IMR-90 (cell line): ENCODE measurements at regions of chr12 and their contacts with region 1.

Region 1: DNA sequence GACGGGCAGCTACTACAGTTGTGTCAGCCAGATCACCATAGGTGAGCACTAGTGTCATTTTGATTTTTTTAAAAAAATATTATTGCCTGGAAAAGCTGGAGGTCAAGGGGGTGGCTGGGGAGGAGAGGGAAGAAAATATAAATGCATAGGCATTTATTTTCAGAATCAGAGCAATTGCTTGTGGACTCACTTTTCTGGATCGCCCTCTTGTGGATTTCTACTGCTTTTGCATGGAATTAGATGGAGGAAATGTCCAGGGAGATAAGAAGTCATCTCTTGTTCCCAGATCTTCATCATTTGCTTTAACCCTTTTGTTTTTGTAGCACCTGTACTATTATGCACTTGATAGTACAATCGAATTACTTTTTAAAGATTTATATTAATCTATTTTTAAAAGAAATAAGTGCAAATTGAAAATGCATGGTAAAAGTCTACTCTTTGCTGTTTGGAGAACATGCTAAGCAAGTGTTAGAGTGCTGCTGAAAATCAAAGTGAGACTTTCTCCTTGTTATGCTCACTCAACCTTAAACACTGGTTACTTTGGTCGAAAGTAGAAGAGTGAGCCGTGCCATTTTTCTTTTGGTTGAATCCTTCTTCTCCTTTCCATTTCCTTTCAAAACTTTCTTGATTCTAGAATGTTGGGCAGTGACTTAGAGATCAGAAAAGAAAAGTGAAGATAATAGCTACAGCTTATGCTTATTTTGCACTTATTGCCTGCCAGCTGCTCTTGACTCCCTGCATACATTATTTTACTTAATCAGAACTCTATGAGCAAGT is 60.6 kb upstream of the ANO4 start:
- DNase-seq: peak; percentile 60
- ATAC-seq: peak; percentile 81
- H3K4me3 ChIP-seq: no peak overlapping the region
- H3K27ac ChIP-seq: no peak overlapping the region
- H3K4me1 ChIP-seq: no peaks in the 10 kb centered on the region
- H3K27me3 ChIP-seq: no peaks in the 10 kb centered on the region; the same call in 1 of the 2 replicates
- CTCF ChIP-seq: peak; percentile 67
- POLR2A ChIP-seq: no peak
- RAD21 ChIP-seq: peak; percentile 59

Region 2: DNA sequence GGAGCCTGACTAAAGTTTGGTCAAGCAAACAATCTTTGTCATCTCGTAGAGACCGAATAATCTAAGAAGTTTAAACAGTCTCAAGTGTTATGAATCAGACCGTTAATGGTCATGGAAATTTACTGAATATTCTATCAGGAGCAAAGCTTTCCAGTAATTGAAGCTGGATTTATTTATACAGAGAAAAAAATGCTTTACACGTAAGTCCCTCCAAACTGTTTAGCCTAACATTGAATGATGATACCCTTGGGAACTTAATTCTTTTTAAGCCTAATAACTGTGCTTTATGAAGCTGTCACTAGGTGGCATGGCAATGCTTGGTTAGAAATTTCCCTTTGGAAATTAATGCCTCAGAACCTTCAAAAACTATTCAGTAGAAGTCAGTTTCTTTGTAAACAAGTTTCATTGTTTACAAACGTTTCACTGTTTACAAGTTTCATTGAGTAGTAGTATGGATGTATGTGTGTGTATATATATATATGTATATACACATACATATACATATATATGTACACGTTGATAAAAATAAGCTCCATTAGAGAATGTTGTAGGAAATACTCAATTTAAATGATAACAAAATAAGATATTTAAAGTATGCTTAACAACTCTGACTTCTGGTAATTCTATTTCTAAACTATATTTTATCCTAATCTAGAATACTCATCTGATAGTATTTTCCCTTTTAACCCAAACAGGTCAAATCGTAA is 499.3 kb before region 1 on chr12:
- CTCF ChIA-PET with region 1: interaction called, 4 read pairs
- POLR2A ChIA-PET with region 1: no interaction called
- dilution Hi-C with region 1: no loop called
- in situ Hi-C with region 1: no loop called
- intact Hi-C with region 1: loop called (anchors 5 kb)
- DNase-seq: peak; percentile 86
- ATAC-seq: peak; percentile 94
- H3K4me3 ChIP-seq: no peak overlapping the region
- H3K27ac ChIP-seq: peak overlapping the region; percentile 46; the same call in 1 of the 2 replicates
- H3K4me1 ChIP-seq: peaks cover 3% of the 10 kb centered on the region
- H3K27me3 ChIP-seq: no peaks in the 10 kb centered on the region
- CTCF ChIP-seq: peak; percentile 91
- POLR2A ChIP-seq: no peak
- RAD21 ChIP-seq: peak; percentile 80

Region 3: DNA sequence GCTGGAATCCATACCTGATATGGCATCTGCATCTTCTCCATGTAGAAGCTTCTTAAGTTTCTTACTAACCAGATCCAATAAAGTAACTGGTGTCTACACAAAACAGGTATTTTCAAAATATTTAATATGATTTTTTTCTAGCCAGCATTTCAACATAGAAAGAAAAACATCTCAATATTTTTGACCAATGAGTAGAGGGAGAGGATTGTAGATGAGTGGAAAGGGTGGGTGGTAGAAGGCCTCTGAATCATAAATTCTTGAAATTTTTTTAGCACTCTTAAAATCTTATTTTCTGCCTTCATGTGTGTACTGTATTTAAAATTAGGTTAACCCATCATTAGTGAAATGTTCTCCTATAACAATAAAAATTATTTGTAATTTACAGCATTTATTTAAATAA is 485.1 kb before region 1 on chr12:
- CTCF ChIA-PET with region 1: no interaction called
- POLR2A ChIA-PET with region 1: no interaction called
- dilution Hi-C with region 1: no loop called
- in situ Hi-C with region 1: loop called (anchors 10 kb)
- intact Hi-C with region 1: no loop called
- DNase-seq: peak; percentile 45
- ATAC-seq: peak; percentile 81
- H3K4me3 ChIP-seq: no peak overlapping the region
- H3K27ac ChIP-seq: no peak overlapping the region
- H3K4me1 ChIP-seq: no peaks in the 10 kb centered on the region
- H3K27me3 ChIP-seq: no peaks in the 10 kb centered on the region
- CTCF ChIP-seq: no peak
- POLR2A ChIP-seq: no peak
- RAD21 ChIP-seq: no peak

Region 4: GRCh38 chr12:100348657-100349454 is 385.1 kb before region 1 on chr12:
- CTCF ChIA-PET with region 1: interaction called, 7 read pairs
- POLR2A ChIA-PET with region 1: no interaction called
- dilution Hi-C with region 1: no loop called
- in situ Hi-C with region 1: loop called (anchors 5 kb)
- intact Hi-C with region 1: loop called (anchors 2 kb)
- DNase-seq: peak; percentile 38
- ATAC-seq: peak; percentile 74
- H3K4me3 ChIP-seq: no peak overlapping the region
- H3K27ac ChIP-seq: no peak overlapping the region
- H3K4me1 ChIP-seq: no peaks in the 10 kb centered on the region
- H3K27me3 ChIP-seq: peaks cover 2% of the 10 kb centered on the region; the same call in 1 of the 2 replicates
- CTCF ChIP-seq: peak; percentile 61
- POLR2A ChIP-seq: no peak
- RAD21 ChIP-seq: peak; percentile 70

Region 5: GRCh38 chr12:100573292-100574186 is 160.5 kb before region 1 on chr12 and contains the start of gene GAS2L3:
- CTCF ChIA-PET with region 1: no interaction called
- POLR2A ChIA-PET with region 1: no interaction called
- dilution Hi-C with region 1: no loop called
- in situ Hi-C with region 1: no loop called
- intact Hi-C with region 1: loop called (anchors 5 kb)
- DNase-seq: peak; percentile 79
- ATAC-seq: peak; percentile 96
- H3K4me3 ChIP-seq: peak within 1 kb of the TSS; percentile 85
- H3K27ac ChIP-seq: peak within 1 kb of the TSS; percentile 51; the same call in 1 of the 2 replicates
- H3K4me1 ChIP-seq: peaks cover 2% of the 10 kb centered on the region; the same call in 1 of the 2 replicates
- H3K27me3 ChIP-seq: no peaks in the 10 kb centered on the region
- CTCF ChIP-seq: no peak
- POLR2A ChIP-seq: peak; percentile 59; the same call in 1 of the 2 replicates
- RAD21 ChIP-seq: no peak
- total RNA-seq, gene GAS2L3: 15.6 and 27.2 TPM in 2 replicates

Region 6: DNA sequence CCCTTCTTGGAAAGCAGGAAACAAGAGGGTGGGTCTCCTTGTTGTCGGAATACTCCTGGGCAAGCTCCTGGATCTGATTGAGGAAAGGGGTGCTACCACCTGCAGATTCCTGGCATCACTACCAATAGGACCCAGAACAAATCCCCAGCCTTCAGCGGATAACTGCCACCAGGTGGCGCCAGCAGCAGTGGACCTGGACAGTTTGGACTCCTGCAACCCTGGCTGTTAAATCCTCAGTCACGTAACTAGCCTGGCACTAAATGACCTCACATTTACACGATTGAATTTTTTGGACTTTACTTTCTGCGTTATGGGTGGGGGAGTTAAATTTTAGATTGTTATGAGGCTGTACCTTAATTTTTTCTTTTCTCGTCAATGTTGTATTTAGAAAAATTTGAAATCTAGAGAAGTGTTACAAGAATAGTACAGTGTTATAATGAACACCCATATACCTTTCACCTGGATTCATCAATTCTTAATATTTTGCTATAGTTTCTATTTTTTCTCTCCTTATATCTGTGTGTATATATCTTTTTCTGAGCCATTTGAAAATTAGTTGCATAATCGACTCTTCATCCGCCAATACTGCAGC is 65.0 kb before region 1 on chr12:
- CTCF ChIA-PET with region 1: interaction called, 3 read pairs
- POLR2A ChIA-PET with region 1: no interaction called
- dilution Hi-C with region 1: no loop called
- in situ Hi-C with region 1: loop called (anchors 10 kb)
- intact Hi-C with region 1: loop called (anchors 5 kb)
- DNase-seq: peak; percentile 61
- ATAC-seq: peak; percentile 96
- H3K4me3 ChIP-seq: no peak overlapping the region
- H3K27ac ChIP-seq: no peak overlapping the region
- H3K4me1 ChIP-seq: no peaks in the 10 kb centered on the region
- H3K27me3 ChIP-seq: peaks cover 3% of the 10 kb centered on the region
- CTCF ChIP-seq: peak; percentile 83
- POLR2A ChIP-seq: no peak
- RAD21 ChIP-seq: peak; percentile 68